Panc1 (cell line): ENCODE measurements at regions of chr1 and their contacts with region 1.

Region 1: DNA sequence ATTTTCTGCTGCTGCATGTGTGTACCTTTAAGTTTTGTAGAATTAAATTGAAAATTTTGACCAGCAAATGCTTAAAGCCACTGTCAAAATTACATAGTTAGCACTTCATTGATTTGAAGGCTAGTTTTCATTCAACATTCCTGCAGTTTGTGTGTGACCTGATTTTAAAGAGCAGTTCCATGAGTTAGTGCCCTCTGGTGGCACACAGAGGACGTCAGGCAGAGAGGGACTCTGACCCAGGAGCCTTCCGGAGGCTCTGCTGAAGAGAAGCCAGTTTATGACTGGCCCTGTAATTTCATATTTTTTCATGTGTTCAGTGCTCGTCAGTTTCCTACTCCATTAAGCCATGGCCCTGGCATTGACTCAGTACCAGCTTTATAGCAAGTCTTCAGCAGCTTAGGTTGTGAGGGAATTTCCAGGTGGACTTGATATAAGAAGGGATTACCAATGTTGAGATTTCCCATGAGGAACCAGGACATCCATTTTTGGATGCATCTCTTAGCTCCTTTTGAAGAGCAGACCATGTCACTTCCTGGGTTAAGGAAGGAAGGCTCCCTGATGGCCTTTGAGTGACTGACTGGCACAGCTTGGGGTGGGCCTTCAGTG is 104.7 kb downstream of the CAMTA1 start:
- DNase-seq: peak; percentile 39
- ATAC-seq: peak; percentile 90
- H3K4me3 ChIP-seq: no peak overlapping the region
- H3K27ac ChIP-seq: no peak overlapping the region
- H3K4me1 ChIP-seq: no peaks in the 10 kb centered on the region
- H3K27me3 ChIP-seq: no peaks in the 10 kb centered on the region
- CTCF ChIP-seq: peak; percentile 88

Region 2: GRCh38 chr1:6427445-6428381 is 462.3 kb before region 1 on chr1:
- CTCF ChIA-PET with region 1: no interaction called
- POLR2A ChIA-PET with region 1: no interaction called
- in situ Hi-C with region 1: no loop called
- intact Hi-C with region 1: no loop called
- DNase-seq: no peak
- ATAC-seq: peak; percentile 14; the same call in 1 of the 2 replicates
- H3K4me3 ChIP-seq: no peak overlapping the region
- H3K27ac ChIP-seq: no peak overlapping the region
- H3K4me1 ChIP-seq: peaks cover 26% of the 10 kb centered on the region
- H3K27me3 ChIP-seq: no peaks in the 10 kb centered on the region
- CTCF ChIP-seq: no peak

Region 3: DNA sequence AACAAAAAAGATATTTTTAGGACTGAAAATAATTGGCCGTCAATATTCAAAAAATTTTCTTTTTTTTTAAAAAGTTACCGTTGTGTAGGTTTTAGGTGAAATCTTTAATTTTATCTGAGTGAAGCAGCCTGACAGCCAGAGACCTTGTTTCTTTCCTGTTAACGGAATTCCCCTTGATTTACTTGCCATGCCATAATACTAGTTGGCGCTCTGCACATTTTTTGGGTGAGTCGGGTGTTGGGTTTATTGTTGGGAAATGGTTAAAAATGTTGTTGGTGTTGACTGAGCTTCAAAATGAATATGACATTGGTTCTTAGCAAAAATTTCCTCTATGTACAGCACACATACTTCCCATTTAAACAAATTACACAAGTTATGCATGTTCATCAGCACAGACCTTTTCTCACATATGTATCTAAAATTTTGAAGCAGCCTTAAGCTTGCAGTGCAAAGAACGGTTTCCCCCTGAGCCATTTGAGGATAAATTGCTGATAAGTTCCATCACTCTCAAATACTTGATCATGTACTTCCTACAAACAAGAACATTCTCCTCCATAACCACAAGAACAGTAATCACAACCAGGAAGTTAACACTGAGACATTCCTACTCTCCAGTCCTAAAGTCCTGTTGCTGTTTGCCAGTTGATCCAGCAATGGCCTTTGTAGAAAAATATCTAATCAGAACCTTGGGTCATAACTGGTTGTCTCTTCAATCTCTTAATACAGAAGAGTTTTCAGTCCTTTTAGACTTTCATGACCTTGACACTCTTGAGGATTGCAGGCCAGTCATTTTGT is 70.5 kb before region 1 on chr1:
- CTCF ChIA-PET with region 1: no interaction called
- POLR2A ChIA-PET with region 1: no interaction called
- in situ Hi-C with region 1: no loop called
- intact Hi-C with region 1: loop called (anchors 10 kb)
- DNase-seq: no peak
- ATAC-seq: no peak
- H3K4me3 ChIP-seq: no peak overlapping the region
- H3K27ac ChIP-seq: no peak overlapping the region
- H3K4me1 ChIP-seq: 0 out of 2 replicates have a peak, but pooled peaks cover 2% of the 10 kb centered on the region
- H3K27me3 ChIP-seq: no peaks in the 10 kb centered on the region
- CTCF ChIP-seq: no peak